Activated T-helper 1 cell treated with anti-CD3 and anti-CD28 coated beads, Interleukin-12 subunit alpha, Interleukin-12 subunit beta, Interleukin-2, Interleukin-4 antibody, amounts not matched to agents 30 ng/mL and 10 ng/mL and 1 ng/mL, durations not matched to agents 14 hours and 24 hours and 36 hours (primary cell): ENCODE measurements at regions of chr12 and their contacts with region 1.

Region 1: GRCh38 chr12:9797722-9798619 is 29.3 kb upstream of the KLRF1 start:
- DNase-seq: peak; percentile 73
- H3K4me3 Mint-ChIP-seq: peak overlapping the region; percentile 46
- H3K27ac Mint-ChIP-seq: peak overlapping the region; percentile 41
- H3K4me1 Mint-ChIP-seq: peaks cover 49% of the 10 kb centered on the region
- H3K27me3 Mint-ChIP-seq: peaks cover 5% of the 10 kb centered on the region

Region 2: GRCh38 chr12:9347328-9348127 is 450.4 kb before region 1 on chr12:
- intact Hi-C with region 1: no loop called
- DNase-seq: no peak
- H3K4me3 Mint-ChIP-seq: no peak overlapping the region
- H3K27ac Mint-ChIP-seq: no peak overlapping the region
- H3K4me1 Mint-ChIP-seq: peaks cover 11% of the 10 kb centered on the region
- H3K27me3 Mint-ChIP-seq: no peaks in the 10 kb centered on the region

Region 3: DNA sequence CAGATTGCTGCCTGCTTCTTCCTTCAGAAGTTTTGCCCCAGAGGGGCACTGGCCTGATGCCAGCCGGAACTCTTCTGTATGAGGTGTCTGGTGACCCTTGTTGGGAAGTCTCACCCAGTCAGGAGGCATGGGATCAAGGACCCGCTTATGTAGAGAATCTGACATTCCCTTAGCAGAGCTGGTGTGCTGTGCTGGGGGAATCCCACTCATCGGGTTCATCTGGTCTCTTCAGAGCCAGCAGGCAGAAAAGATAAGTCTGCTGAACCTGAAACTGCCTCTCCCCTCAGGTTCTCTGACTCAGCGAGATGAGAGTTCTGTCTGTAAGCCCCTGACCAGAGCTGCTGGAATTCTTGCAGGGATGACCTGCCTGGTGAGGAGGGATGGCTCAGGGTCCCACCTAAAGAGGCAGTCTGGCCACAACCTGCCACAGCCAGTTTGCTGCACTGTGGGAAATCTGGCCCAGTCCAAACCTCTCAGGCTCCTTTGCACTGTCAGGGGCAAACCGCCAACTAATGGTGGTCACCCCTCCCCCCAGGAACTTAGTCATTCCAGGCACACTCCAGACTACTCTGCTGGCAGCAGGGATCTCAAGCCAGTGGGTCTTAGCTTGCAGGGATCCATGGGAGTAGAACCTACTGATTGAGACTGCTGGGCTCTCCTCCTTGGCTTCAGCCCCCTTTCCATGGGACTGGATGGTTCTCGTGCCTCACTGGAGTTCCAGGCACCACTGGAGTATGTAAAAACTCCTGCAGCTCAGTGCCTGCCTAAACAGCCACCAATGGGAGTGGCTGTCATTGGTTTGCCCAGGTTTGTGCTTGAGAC is 124.4 kb before region 1 on chr12:
- intact Hi-C with region 1: loop called (anchors 1 kb)
- DNase-seq: no peak
- H3K4me3 Mint-ChIP-seq: peak overlapping the region; percentile 90
- H3K27ac Mint-ChIP-seq: peak overlapping the region; percentile 97
- H3K4me1 Mint-ChIP-seq: peaks cover 73% of the 10 kb centered on the region
- H3K27me3 Mint-ChIP-seq: no peaks in the 10 kb centered on the region

Region 4: DNA sequence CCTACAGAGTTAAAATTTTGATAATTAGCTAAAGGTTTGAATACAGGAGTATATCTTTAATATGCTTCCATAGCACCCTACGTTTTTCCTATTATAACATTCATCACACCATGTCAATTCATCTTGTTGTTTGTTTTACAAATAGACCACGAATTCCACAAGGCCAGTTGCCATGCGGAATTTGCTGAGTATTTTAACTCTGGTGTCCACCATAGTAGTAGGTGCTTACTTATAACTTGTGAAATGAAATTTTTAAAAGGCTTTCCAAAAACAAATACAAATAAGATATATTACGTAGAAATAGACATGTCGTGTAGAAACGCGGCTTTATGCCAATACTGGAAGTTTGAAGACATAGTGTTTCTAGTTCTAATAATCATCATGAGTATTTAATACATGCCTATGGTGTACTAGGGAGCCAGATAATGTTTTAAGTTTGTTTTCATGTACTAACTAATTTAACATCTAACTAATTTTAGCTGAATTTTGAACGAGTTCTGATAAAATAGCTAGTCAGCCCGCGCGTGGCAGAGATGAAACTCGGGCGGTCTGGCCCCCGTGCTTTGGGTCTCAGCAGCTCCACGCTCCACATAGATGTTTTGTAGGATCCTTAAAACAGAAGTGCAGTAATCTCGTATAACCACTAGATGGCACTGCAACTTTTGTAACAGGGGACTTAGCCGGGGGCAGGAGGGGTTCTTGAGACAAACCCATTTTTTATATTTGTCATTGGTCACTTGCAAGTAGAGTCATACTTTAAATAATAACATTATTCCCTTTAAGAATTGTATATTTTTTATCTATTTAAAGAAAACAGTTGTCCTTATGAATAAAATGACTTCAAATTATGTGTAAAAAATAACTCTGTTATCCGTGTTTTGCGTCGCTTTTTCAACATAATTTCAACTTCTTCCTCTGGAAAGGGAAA is 47.4 kb before region 1 on chr12:
- intact Hi-C with region 1: loop called (anchors 1 kb)
- DNase-seq: peak; percentile 55
- H3K4me3 Mint-ChIP-seq: peak overlapping the region; percentile 58
- H3K27ac Mint-ChIP-seq: peak overlapping the region; percentile 79
- H3K4me1 Mint-ChIP-seq: peaks cover 62% of the 10 kb centered on the region
- H3K27me3 Mint-ChIP-seq: no peaks in the 10 kb centered on the region

Region 5: GRCh38 chr12:9773216-9773877 is 24.6 kb before region 1 on chr12:
- intact Hi-C with region 1: loop called (anchors 1 kb)
- DNase-seq: no peak
- H3K4me3 Mint-ChIP-seq: no peak overlapping the region
- H3K27ac Mint-ChIP-seq: no peak overlapping the region
- H3K4me1 Mint-ChIP-seq: peaks cover 78% of the 10 kb centered on the region
- H3K27me3 Mint-ChIP-seq: no peaks in the 10 kb centered on the region

Region 6: GRCh38 chr12:9925708-9926393 is 127.9 kb after region 1 on chr12:
- intact Hi-C with region 1: loop called (anchors 1 kb)
- DNase-seq: no peak
- H3K4me3 Mint-ChIP-seq: peak overlapping the region; percentile 66
- H3K27ac Mint-ChIP-seq: no peak overlapping the region
- H3K4me1 Mint-ChIP-seq: peaks cover 22% of the 10 kb centered on the region
- H3K27me3 Mint-ChIP-seq: peaks cover 13% of the 10 kb centered on the region

Region 7: GRCh38 chr12:10701131-10701681 is 903.2 kb after region 1 on chr12:
- intact Hi-C with region 1: loop called (anchors 5 kb)
- DNase-seq: no peak
- H3K4me3 Mint-ChIP-seq: peak overlapping the region; percentile 4
- H3K27ac Mint-ChIP-seq: peak overlapping the region; percentile 15
- H3K4me1 Mint-ChIP-seq: peaks cover 17% of the 10 kb centered on the region
- H3K27me3 Mint-ChIP-seq: no peaks in the 10 kb centered on the region